ENCODE measurements at regions of chr1 and their contacts with region 1.

Region 1: GRCh38 chr1:117758444-117759316 is 152.8 kb downstream of the TENT5C start:
- DNase-seq: peak; percentile 67 to 71
- ATAC-seq: peak; percentile 94 to 99
- H3K4me3 ChIP-seq: peak overlapping the region; percentile 47
- H3K27ac ChIP-seq: peak overlapping the region in 1 of 2 experiments; percentile 70; a peak in 4 of 6 replicates
- H3K4me1 ChIP-seq: no peaks in the 10 kb centered on the region
- CTCF ChIP-seq: peak; percentile 71
- EP300 ChIP-seq: no peak
- POLR2A ChIP-seq: no peak
- RAD21 ChIP-seq: peak; percentile 57 to 64; a peak in 4 of 5 replicates

Region 2: GRCh38 chr1:117534995-117535467 is 223.6 kb before region 1 on chr1:
- CTCF ChIA-PET with region 1: interaction called, 47 read pairs
- POLR2A ChIA-PET with region 1: no interaction called
- DNase-seq: peak; percentile 5 to 53
- ATAC-seq: peak; percentile 87 to 95
- H3K4me3 ChIP-seq: no peak overlapping the region
- H3K27ac ChIP-seq: no peak overlapping the region
- H3K4me1 ChIP-seq: no peaks in the 10 kb centered on the region
- CTCF ChIP-seq: peak; percentile 66
- EP300 ChIP-seq: no peak
- POLR2A ChIP-seq: no peak
- RAD21 ChIP-seq: peak; percentile 57 to 60

Region 3: GRCh38 chr1:117607471-117607870 is 151.2 kb before region 1 on chr1:
- CTCF ChIA-PET with region 1: interaction called, 11 read pairs
- POLR2A ChIA-PET with region 1: interaction called, 8 read pairs
- DNase-seq: no peak
- ATAC-seq: no peak
- H3K4me3 ChIP-seq: no peak overlapping the region
- H3K27ac ChIP-seq: no peak overlapping the region
- H3K4me1 ChIP-seq: peaks cover 8% of the 10 kb centered on the region; the same call in 2 of the 3 replicates
- CTCF ChIP-seq: no peak
- EP300 ChIP-seq: no peak
- POLR2A ChIP-seq: no peak
- RAD21 ChIP-seq: no peak

Region 4: DNA sequence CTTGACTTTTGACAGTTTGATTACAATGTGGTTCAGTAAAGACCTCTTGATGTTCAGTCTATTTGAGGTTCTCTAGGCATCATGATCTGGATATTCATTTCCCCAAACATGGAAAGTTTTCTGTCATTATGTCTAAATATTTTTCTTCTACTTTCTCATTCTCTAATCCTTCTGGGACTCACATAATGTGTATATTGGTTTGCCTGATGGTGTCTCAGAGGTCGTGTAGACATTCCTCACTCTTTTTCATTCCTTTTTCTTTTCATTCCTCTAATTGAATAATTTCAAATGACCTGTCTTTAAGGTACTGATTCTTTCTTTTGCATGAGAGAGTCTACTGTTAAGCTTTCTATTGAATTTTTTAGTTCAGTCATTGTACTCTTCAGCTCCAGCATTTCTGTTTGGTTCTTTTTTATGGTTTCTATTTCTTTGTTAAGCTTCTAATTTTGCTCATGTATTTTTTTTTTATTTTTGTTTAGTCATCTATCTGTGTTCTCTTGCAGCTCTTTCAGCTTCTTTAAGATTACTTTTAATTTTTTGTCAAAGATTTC is 12.4 kb after region 1 on chr1:
- CTCF ChIA-PET with region 1: interaction called, 14 read pairs
- POLR2A ChIA-PET with region 1: no interaction called
- DNase-seq: no peak
- ATAC-seq: no peak
- H3K4me3 ChIP-seq: no peak overlapping the region
- H3K27ac ChIP-seq: no peak overlapping the region
- H3K4me1 ChIP-seq: no peaks in the 10 kb centered on the region
- CTCF ChIP-seq: no peak
- EP300 ChIP-seq: no peak
- POLR2A ChIP-seq: no peak
- RAD21 ChIP-seq: no peak

Measured in A549 (cell line).